Left cardiac atrium (tissue), 4 donors: ENCODE measurements at regions of chr15 and their contacts with region 1.

Region 1: DNA sequence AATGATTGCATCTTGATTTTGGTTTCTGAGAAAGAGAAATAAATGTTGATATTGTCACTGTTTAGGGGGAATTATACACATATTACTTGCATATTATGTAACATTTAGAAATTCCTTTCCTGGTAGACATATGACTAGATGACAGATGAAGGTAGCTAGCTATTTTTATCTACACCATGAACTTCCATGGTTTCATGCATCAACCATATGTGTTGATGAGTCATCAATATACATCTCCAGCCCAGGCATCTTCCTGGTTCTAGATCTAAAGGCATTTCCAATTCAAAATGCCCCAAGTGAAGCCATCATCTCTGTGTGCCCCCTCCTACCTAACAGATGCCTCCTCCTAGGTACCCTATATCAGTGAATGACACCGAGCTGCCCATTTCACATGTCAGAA is 9.5 kb upstream of the ADAMTSL3 start:
- DNase-seq: no peak
- ATAC-seq: no peak

Region 2: DNA sequence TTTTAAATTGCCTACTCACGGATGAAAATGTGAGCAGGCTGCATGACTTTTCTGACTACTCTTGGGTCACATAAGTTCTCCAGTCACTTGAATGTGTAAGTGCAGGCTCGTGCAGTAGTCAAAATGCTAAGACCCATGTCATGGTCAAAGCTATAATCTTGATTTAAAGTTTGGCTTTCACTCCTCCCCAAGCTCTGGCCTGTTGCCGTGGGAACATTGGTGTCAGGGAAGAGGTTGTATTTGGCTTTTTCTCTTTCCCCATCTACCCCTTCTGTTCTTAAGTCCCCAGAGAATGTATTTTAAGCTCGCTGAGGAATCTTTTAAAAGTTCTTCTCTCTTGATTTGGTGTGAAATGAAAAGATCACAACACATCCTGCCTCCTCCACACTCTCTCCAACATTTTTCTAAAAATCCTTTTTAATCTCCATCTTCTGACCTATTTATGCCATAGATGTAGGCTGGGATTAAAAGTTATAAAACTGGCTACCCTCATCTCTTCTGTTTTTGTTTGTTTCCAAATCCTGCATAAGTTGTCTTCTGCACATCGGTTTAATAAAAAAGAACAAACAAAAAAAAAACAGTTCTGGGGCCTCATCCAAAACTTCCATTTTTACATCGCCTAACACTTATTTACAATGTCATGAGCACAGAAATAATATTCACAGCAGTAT is 51.9 kb before region 1 on chr15:
- intact Hi-C with region 1: loop called in 1 of 2 experiments (anchors 10 kb)
- DNase-seq: no peak
- ATAC-seq: no peak